Caco-2 (cell line): ENCODE measurements at regions of chr7 and their contacts with region 1.

Region 1: GRCh38 chr7:96729822-96730221 is 20.2 kb upstream of the SEM1 start:
- DNase-seq: no peak
- H3K4me3 ChIP-seq: no peak overlapping the region
- H3K4me3 Mint-ChIP-seq: no peak overlapping the region
- H3K27ac Mint-ChIP-seq: no peak overlapping the region
- H3K4me1 ChIP-seq: no peaks in the 10 kb centered on the region
- H3K4me1 Mint-ChIP-seq: no peaks in the 10 kb centered on the region
- H3K27me3 ChIP-seq: no peaks in the 10 kb centered on the region
- H3K27me3 Mint-ChIP-seq: no peaks in the 10 kb centered on the region
- CTCF ChIP-seq: no peak

Region 2: GRCh38 chr7:96612034-96612433 is 117.8 kb before region 1 on chr7:
- CTCF ChIA-PET with region 1: no interaction called
- POLR2A ChIA-PET with region 1: no interaction called
- intact Hi-C with region 1: no loop called
- DNase-seq: no peak
- H3K4me3 ChIP-seq: no peak overlapping the region
- H3K4me3 Mint-ChIP-seq: no peak overlapping the region
- H3K27ac Mint-ChIP-seq: no peak overlapping the region
- H3K4me1 ChIP-seq: no peaks in the 10 kb centered on the region
- H3K4me1 Mint-ChIP-seq: no peaks in the 10 kb centered on the region
- H3K27me3 ChIP-seq: no peaks in the 10 kb centered on the region
- H3K27me3 Mint-ChIP-seq: peaks cover 3% of the 10 kb centered on the region
- CTCF ChIP-seq: no peak

Region 3: DNA sequence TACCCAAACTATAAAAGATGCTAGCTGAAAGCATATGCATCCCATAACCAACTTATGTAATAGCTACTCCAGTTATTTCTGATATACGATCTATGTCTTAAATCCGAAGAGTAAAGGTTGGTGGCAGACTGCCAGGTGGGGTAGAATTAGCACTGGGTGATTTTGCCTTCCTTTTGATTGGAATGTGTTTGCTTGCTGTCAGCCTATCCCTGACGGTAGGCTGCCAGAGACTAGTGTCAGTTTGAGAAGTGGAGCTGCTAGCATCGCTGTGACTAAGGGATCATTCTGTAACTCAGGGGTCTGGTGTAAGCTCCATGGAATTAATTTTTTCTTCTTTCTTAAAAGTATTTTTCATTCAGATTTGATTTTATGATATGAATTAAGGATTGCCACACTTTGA is 10.7 kb before region 1 on chr7:
- CTCF ChIA-PET with region 1: interaction called, 10 read pairs
- POLR2A ChIA-PET with region 1: no interaction called
- intact Hi-C with region 1: no loop called
- DNase-seq: no peak
- H3K4me3 ChIP-seq: no peak overlapping the region
- H3K4me3 Mint-ChIP-seq: no peak overlapping the region
- H3K27ac Mint-ChIP-seq: no peak overlapping the region
- H3K4me1 ChIP-seq: no peaks in the 10 kb centered on the region
- H3K4me1 Mint-ChIP-seq: no peaks in the 10 kb centered on the region
- H3K27me3 ChIP-seq: no peaks in the 10 kb centered on the region
- H3K27me3 Mint-ChIP-seq: peaks cover 5% of the 10 kb centered on the region
- CTCF ChIP-seq: no peak